OCI-LY7 (cell line): ENCODE measurements at regions of chr6 and their contacts with region 1.

Region 1: DNA sequence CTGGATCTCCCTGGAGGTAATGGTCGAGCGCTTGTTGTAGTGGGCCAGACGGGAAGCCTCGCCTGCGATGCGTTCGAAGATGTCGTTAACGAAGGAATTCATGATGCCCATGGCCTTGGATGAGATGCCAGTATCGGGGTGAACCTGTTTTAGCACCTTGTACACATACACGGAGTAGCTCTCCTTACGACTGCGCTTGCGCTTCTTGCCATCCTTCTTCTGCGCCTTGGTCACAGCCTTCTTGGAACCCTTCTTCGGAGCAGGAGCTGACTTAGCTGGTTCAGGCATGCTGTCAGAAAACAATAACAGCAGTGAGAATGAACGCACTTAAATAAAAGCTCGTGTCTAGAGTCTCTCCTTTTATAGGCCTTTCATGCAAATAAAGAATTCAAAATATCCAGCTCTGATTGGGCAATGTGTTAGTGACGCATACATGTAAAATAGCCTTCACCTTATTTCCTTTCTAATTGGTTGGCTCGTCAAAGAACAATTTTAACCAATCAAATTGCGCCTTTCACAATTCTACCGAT is 129.2 kb downstream of the HFE start:
- DNase-seq: peak; percentile 98
- H3K4me3 ChIP-seq: peak overlapping the region; percentile 79
- H3K27ac ChIP-seq: peak overlapping the region; percentile 99
- H3K4me1 ChIP-seq: peaks cover 63% of the 10 kb centered on the region
- CTCF ChIP-seq: no peak

Region 2: GRCh38 chr6:26156076-26156849 is 60.2 kb before region 1 on chr6:
- CTCF ChIA-PET with region 1: no interaction called
- POLR2A ChIA-PET with region 1: interaction called, 50 read pairs
- intact Hi-C with region 1: loop called (anchors 1 kb)
- DNase-seq: peak; percentile 88
- H3K4me3 ChIP-seq: peak overlapping the region; percentile 79
- H3K27ac ChIP-seq: peak overlapping the region; percentile 99
- H3K4me1 ChIP-seq: peaks cover 28% of the 10 kb centered on the region
- CTCF ChIP-seq: no peak

Region 3: GRCh38 chr6:26234421-26235296 is 18.2 kb after region 1 on chr6:
- CTCF ChIA-PET with region 1: no interaction called
- POLR2A ChIA-PET with region 1: interaction called, 135 read pairs
- intact Hi-C with region 1: loop called (anchors 1 kb)
- DNase-seq: peak; percentile 90
- H3K4me3 ChIP-seq: peak overlapping the region; percentile 69
- H3K27ac ChIP-seq: peak overlapping the region; percentile 92
- H3K4me1 ChIP-seq: peaks cover 26% of the 10 kb centered on the region
- CTCF ChIP-seq: no peak

Region 4: DNA sequence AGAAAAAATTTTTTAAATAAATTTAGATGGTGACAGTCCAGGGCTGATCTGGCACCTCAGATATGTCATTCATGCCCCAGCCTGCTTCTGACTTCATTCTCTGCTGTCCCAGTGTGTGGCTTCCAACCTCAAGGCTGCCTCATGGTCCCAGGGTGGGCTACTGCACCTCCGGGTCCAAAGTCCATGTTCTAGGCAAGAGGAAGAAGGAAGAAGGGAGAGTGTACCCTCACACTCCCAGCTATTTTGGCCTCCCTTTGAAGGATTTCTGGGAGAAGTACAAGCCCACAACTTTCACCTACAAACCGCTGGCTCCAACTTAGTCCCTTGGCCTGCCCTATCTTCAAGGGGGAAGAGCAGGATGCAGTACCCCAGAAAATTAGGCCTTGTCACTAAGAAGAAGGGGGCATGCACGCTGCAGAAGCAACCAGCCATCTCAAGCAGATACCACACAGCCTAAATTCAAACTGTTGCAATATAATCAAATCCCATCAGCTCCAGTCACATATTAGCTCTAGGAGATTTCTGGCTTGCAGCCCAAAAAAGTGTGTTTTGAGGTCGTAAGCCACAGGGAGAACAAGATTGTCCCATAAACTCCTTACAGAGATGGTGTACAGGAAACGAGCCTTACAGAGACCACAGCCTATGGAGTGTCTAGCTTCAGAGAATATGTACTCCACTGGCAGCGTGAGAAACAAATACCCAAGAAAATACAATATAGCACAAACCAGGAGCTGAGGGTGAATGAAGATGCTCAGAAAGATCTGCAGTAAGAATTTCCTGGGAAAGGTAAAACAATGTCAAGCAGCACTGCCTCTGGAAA is 147.7 kb after region 1 on chr6:
- CTCF ChIA-PET with region 1: no interaction called
- POLR2A ChIA-PET with region 1: interaction called, 5 read pairs
- intact Hi-C with region 1: loop called (anchors 5 kb)
- DNase-seq: peak; percentile 52
- H3K4me3 ChIP-seq: peak overlapping the region; percentile 77
- H3K27ac ChIP-seq: peak overlapping the region; percentile 96
- H3K4me1 ChIP-seq: peaks cover 70% of the 10 kb centered on the region
- CTCF ChIP-seq: no peak

Region 5: DNA sequence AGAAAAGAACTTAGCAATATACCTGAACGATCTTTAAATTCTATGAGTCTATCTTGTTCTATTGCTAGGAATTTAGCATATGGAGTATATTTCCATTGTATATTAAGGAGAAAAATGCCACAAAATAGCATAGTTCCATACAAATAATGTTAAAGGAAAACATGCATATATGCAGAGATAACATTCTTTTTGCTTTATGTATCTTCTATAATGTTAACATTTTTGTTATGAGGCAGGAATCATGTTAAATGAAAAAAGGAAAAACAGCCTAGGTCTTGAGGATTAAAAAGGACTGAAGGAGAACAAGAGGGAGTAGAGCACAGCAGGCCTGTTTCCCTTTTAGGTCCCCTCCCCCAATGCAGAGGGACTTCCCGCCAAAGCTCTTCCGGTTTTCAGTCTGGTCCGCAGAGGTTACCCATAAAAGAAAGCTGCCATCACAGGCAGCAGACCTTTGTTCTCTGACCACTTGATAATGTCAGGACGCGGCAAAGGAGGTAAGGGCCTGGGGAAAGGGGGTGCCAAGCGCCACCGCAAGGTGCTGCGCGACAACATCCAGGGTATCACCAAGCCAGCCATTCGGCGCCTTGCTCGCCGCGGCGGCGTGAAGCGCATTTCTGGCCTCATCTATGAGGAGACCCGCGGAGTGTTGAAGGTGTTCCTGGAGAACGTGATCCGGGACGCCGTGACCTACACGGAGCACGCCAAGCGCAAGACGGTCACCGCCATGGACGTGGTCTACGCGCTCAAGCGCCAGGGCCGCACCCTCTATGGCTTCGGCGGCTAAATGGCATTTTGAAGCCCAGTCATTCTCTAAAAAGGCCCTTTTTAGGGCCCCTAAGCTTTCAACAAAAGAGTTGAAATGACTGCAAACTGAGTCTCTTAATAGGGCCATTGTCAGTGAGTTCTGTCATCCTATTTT is 922.7 kb after region 1 on chr6:
- CTCF ChIA-PET with region 1: no interaction called
- POLR2A ChIA-PET with region 1: interaction called, 10 read pairs
- intact Hi-C with region 1: loop called (anchors 5 kb)
- DNase-seq: peak; percentile 95
- H3K4me3 ChIP-seq: peak overlapping the region; percentile 77
- H3K27ac ChIP-seq: peak overlapping the region; percentile 99
- H3K4me1 ChIP-seq: peaks cover 78% of the 10 kb centered on the region
- CTCF ChIP-seq: no peak

Region 6: DNA sequence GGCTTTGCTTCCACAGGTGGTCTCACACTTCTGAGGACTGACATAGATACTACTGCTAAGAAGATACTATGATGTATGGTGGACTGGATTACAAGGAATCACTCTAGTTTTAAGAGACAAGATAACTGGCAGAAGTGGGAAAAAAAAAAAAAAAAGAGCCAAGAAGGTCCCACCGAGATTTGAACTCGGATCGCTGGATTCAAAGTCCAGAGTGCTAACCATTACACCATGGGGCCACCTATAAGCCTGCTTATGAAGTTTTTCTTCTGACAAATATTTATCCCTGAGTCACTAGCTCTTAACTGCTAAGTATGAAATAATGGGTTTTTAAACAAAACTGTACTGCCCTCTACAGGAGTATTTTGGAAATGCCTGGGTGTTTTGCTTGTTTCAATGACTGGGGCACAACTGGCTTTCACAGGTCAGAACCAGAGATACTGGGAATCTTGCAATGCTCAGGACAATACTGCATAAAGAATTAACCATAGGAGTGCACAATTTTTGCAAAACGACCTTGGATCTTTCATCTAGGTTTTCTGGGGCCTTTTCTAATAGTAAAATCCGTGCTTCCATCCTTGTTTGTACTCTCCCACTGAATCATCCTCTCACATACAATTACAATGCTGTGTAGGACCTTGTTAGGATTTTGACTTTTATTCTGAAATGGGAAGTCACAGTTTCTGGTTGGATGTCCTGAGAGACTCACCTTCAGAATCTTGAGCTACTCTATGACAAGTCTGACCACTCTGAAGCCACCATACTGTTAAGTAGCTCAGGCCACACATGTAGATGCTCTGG is 1579.5 kb after region 1 on chr6:
- CTCF ChIA-PET with region 1: no interaction called
- POLR2A ChIA-PET with region 1: no interaction called
- intact Hi-C with region 1: no loop called
- DNase-seq: peak; percentile 88
- H3K4me3 ChIP-seq: peak overlapping the region; percentile 33
- H3K27ac ChIP-seq: peak overlapping the region; percentile 32
- H3K4me1 ChIP-seq: peaks cover 33% of the 10 kb centered on the region
- CTCF ChIP-seq: peak; percentile 88